ENCODE measurements at regions of chr4 and their contacts with region 1.

Region 1: DNA sequence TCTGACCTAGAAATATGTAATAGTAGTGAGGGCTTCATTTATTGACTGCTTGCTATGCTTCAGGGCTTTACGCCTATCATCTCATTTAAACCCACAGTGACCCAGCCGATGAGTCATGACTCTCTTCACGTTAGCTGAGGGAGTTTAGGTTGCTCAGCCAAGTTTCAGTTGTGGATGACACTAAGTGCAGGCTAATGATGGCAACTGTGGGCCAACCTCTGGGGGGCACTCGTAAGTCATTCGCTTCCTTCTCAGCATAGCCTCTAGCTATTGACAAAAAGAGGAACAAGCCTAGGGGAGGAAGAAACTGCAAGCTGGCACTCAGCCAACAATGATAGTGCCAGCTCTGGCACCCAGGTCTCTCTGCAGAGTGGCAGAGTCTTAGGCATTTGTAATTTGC is 325.0 kb downstream of the ARHGAP10 start:
- DNase-seq: peak; percentile 14 to 77 (median 46)
- H3K4me3 ChIP-seq: no peak overlapping the region
- H3K4me3 Mint-ChIP-seq: peak overlapping the region; percentile 31 to 83 (median 60)
- H3K27ac ChIP-seq: no peak overlapping the region
- H3K27ac Mint-ChIP-seq: peak overlapping the region; percentile 74 to 99 (median 90)
- H3K4me1 ChIP-seq: peaks cover 80% of the 10 kb centered on the region
- H3K4me1 Mint-ChIP-seq: peaks cover 84 to 98% (median 97%) of the 10 kb centered on the region in 3 donors
- H3K27me3 ChIP-seq: no peaks in the 10 kb centered on the region
- H3K27me3 Mint-ChIP-seq: no peaks in the 10 kb centered on the region

Region 2: GRCh38 chr4:148044912-148045352 is 11.9 kb before region 1 on chr4:
- CTCF ChIA-PET with region 1: interaction called, 18 read pairs
- POLR2A ChIA-PET with region 1: no interaction called
- DNase-seq: no peak
- H3K4me3 ChIP-seq: no peak overlapping the region
- H3K4me3 Mint-ChIP-seq: no peak overlapping the region
- H3K27ac ChIP-seq: no peak overlapping the region
- H3K27ac Mint-ChIP-seq: peak overlapping the region in 4 of 8 donors; percentile 30 to 90 (median 52)
- H3K4me1 ChIP-seq: peaks cover 5% of the 10 kb centered on the region
- H3K4me1 Mint-ChIP-seq: peaks cover 5 to 37% (median 30%) of the 10 kb centered on the region in 3 donors
- H3K27me3 ChIP-seq: no peaks in the 10 kb centered on the region
- H3K27me3 Mint-ChIP-seq: peaks cover 0 to under 1% of the 10 kb centered on the region in 2 donors

Measured in CD8-positive, alpha-beta memory T cell (primary cell).